ENCODE measurements at regions of chr12 and their contacts with region 1.

Region 1: GRCh38 chr12:17778242-17778641 is 311.8 kb downstream of the RERGL start:
- DNase-seq: no peak
- H3K4me3 ChIP-seq: no peak overlapping the region
- H3K27ac ChIP-seq: no peak overlapping the region
- H3K4me1 ChIP-seq: no peaks in the 10 kb centered on the region
- H3K27me3 ChIP-seq: no peaks in the 10 kb centered on the region
- CTCF ChIP-seq: no peak
- POLR2A ChIP-seq: no peak

Region 2: GRCh38 chr12:17802657-17803641 is 24.7 kb after region 1 on chr12:
- intact Hi-C with region 1: no loop called
- DNase-seq: peak; percentile 23
- H3K4me3 ChIP-seq: no peak overlapping the region
- H3K27ac ChIP-seq: no peak overlapping the region
- H3K4me1 ChIP-seq: no peaks in the 10 kb centered on the region
- H3K27me3 ChIP-seq: no peaks in the 10 kb centered on the region
- CTCF ChIP-seq: no peak
- POLR2A ChIP-seq: no peak

Region 3: GRCh38 chr12:17818931-17819330 is 40.7 kb after region 1 on chr12:
- intact Hi-C with region 1: no loop called
- DNase-seq: no peak
- H3K4me3 ChIP-seq: no peak overlapping the region
- H3K27ac ChIP-seq: no peak overlapping the region
- H3K4me1 ChIP-seq: no peaks in the 10 kb centered on the region
- H3K27me3 ChIP-seq: no peaks in the 10 kb centered on the region
- CTCF ChIP-seq: no peak
- POLR2A ChIP-seq: no peak

Region 4: DNA sequence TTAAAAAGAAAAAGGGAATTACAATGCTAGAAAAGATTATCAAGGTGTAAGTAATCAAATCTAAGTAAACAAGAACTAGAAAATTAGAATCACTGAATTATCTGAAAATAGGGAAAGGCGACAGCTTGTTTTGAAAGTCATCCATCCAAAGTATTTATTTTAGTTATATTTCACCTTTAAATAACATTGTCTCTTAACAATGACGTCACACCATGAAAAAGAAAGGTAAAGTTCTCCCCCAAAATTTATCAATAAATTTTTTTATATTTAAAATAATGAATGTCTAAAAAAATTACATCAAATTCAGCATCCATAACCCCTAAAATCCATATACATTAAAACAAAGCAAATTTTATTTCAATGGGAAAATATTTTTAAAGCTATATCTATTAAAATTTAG is 88.6 kb after region 1 on chr12:
- intact Hi-C with region 1: loop called (anchors 5 kb)
- DNase-seq: no peak
- H3K4me3 ChIP-seq: no peak overlapping the region
- H3K27ac ChIP-seq: no peak overlapping the region
- H3K4me1 ChIP-seq: no peaks in the 10 kb centered on the region
- H3K27me3 ChIP-seq: no peaks in the 10 kb centered on the region
- CTCF ChIP-seq: no peak
- POLR2A ChIP-seq: no peak

Region 5: DNA sequence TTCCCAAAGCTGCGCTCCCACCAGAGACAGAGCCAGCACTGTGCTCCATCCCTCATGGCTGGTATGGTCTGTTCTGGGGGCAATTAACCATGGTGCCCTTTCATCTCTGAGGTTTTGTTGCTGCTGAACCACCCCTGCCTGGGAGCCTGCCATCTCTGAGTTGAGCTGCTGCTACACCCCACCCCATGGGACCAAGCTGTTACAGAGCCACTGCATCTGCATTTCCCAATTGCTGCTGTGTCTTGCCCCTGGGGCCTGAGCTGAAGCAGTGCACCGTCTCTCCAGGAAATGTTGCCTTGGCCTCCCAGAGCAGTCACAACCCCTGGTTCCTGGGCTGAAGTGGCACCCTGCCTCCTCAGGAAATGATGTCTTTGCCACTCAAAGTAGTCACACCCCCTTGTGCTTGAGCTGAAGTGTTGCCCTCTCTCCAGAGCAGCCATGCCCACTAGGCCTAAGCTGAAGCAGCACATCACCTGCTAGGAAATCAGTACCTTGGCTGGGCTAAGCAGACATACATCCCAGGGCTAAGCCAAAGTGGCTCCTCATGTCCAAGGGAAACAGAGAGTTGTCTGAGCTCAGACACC is 171.4 kb after region 1 on chr12:
- intact Hi-C with region 1: no loop called
- DNase-seq: no peak
- H3K4me3 ChIP-seq: no peak overlapping the region
- H3K27ac ChIP-seq: no peak overlapping the region
- H3K4me1 ChIP-seq: no peaks in the 10 kb centered on the region
- H3K27me3 ChIP-seq: no peaks in the 10 kb centered on the region
- CTCF ChIP-seq: no peak
- POLR2A ChIP-seq: no peak

Measured in spleen (tissue), 13 donors.